Prostate gland (tissue), 2 donors: ENCODE measurements at regions of chr3 and their contacts with region 1.

Region 1: DNA sequence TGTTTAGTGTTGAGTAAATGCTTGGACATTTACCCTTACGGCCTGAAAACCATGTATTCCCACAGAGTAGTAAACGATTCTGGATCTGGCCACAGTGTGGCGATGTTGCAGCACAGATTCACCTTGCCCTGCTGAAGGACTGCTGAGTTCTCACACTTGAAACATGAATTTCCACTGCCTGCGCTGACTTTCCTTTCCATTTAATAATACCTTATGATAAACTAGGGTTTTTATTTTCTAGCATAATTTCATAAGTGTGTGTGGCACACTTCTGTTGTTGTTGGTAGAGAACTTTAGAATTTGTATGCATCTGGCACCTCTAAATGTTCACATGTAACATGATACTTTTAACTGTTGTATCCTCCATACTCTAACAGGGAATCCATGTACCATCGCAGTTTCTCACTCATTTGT is 53.9 kb downstream of the C3orf38 start:
- DNase-seq: peak; percentile 61
- H3K4me3 ChIP-seq: no peak overlapping the region
- H3K27ac ChIP-seq: no peak overlapping the region
- H3K4me1 ChIP-seq: no peaks in the 10 kb centered on the region
- H3K27me3 ChIP-seq: no peaks in the 10 kb centered on the region
- CTCF ChIP-seq: peak; percentile 58 to 75 (median 70)
- POLR2A ChIP-seq: no peak

Region 2: DNA sequence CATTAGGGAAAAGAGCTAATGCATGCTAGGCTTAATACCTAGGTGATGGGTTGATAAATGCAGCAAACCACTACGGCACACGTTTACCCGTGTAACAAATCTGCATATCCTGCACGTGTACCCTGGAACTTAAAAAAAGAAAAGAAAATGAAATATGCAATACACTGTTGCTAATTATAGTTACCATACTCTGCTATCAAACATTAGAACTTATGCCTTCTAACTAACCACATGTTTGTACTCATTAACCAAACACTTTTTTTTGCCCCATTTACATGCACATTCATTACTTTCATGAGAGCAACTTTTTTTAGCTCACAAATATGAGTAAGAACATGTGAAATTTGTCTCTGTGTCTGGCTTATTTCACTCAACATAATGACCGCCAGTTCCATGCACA is 398.0 kb before region 1 on chr3:
- intact Hi-C with region 1: no loop called
- DNase-seq: no peak
- H3K4me3 ChIP-seq: no peak overlapping the region
- H3K27ac ChIP-seq: no peak overlapping the region
- H3K4me1 ChIP-seq: no peaks in the 10 kb centered on the region
- H3K27me3 ChIP-seq: no peaks in the 10 kb centered on the region
- CTCF ChIP-seq: no peak
- POLR2A ChIP-seq: no peak

Region 3: GRCh38 chr3:87873136-87873535 is 330.5 kb before region 1 on chr3:
- intact Hi-C with region 1: no loop called
- DNase-seq: no peak
- H3K4me3 ChIP-seq: no peak overlapping the region
- H3K27ac ChIP-seq: no peak overlapping the region
- H3K4me1 ChIP-seq: no peaks in the 10 kb centered on the region
- H3K27me3 ChIP-seq: no peaks in the 10 kb centered on the region
- CTCF ChIP-seq: no peak
- POLR2A ChIP-seq: no peak

Region 4: DNA sequence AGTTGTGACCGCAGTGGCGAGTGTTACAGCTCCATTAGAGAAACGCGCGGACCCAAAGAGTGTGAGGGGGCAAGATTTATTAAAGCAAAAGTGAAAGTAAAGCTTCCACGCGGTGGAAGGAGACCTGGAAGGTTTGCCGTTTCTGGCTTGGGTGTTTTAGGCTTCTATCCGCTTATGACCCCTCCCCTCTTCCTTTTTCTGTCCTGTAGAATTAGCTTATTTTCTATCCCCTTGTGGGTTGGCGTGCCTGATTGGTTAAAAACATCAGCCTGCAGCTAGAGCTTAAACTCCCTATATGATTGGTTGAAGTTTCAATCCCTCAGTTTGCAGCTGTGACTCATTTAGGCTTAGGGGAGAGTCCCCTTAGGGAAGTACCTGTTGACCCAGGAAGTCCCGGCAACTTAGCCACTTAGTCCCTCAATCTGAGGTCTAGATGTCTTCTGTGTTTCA is 14.3 kb before region 1 on chr3:
- intact Hi-C with region 1: no loop called
- DNase-seq: no peak
- H3K4me3 ChIP-seq: no peak overlapping the region
- H3K27ac ChIP-seq: no peak overlapping the region
- H3K4me1 ChIP-seq: no peaks in the 10 kb centered on the region
- H3K27me3 ChIP-seq: no peaks in the 10 kb centered on the region
- CTCF ChIP-seq: no peak
- POLR2A ChIP-seq: no peak

Region 5: GRCh38 chr3:90091204-90091924 is 1887.7 kb after region 1 on chr3:
- intact Hi-C with region 1: loop called (anchors 5 kb)
- DNase-seq: peak; percentile 4
- H3K4me3 ChIP-seq: no peak overlapping the region
- H3K27ac ChIP-seq: no peak overlapping the region
- H3K4me1 ChIP-seq: no peaks in the 10 kb centered on the region
- H3K27me3 ChIP-seq: no peaks in the 10 kb centered on the region
- CTCF ChIP-seq: peak in 3 of 4 experiments; percentile 12 to 39 (median 21)
- POLR2A ChIP-seq: no peak

Region 6: DNA sequence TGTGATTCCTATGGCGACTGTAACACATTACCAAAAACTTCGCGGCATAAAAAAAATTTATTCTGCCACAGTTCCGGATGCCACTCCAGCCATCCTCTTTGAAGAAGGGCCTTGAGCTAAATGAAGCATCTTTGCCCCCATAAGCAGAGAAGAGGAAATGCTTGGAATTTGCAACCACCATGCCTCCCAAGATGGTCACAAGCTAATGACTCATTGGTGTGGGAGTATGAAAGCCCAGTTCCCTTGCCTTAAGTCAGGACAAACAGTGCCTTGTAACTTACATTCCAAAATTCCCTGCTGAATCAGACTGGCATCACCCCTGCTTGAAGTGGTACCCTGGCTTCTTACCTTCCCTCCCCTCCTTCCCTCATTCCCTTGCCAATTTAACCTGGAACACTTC is 1981.2 kb after region 1 on chr3:
- intact Hi-C with region 1: loop called (anchors 10 kb)
- DNase-seq: no peak
- H3K4me3 ChIP-seq: no peak overlapping the region
- H3K27ac ChIP-seq: no peak overlapping the region
- H3K4me1 ChIP-seq: no peaks in the 10 kb centered on the region
- H3K27me3 ChIP-seq: no peaks in the 10 kb centered on the region
- CTCF ChIP-seq: no peak
- POLR2A ChIP-seq: no peak